Calu3 (cell line): ENCODE measurements at regions of chr10 and their contacts with region 1.

Region 1: DNA sequence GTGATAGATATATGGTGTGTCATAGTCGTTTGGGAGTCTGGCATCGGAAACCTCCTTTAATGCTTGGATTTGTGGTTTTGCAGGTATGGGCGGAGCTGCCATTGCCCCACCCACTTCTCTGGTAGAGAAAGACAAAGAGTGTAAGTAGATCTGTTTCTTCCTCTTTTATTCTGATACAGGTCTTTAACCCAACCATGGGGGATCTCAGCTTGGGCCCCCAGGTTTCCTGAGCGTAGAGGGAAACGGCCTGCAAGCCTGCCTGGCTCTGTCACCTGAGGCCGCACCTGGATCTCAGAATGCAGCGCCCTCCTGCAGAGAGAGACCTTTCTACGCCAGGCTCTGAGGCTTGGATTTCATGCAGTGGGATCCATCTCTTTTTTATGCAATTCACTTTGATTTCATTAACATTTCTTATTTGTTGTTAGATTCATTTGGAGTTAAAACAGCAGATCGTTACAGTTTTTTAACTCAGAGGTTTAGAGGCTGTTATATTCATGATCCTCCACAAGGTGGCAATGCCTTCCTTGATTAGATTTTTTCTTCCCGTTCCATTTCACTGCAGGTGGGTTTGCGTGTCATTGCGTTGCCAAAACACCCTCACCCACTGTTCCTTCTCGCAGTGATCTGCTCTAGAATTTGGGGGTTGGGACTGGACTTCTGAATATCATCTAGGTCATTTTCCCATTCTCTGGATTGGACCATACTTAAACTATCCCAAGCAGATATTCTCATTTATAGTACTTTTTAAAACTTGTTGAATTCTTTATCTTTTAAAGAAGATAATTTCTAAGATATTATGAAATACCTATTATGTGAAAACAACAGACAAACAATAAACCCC is 20.0 kb downstream of the RBM17 start:
- DNase-seq: peak; percentile 27
- H3K4me3 Mint-ChIP-seq: no peak overlapping the region
- H3K27ac Mint-ChIP-seq: peak overlapping the region; percentile 60
- H3K4me1 Mint-ChIP-seq: peaks cover 14% of the 10 kb centered on the region
- H3K27me3 Mint-ChIP-seq: no peaks in the 10 kb centered on the region
- CTCF ChIP-seq: peak; percentile 42

Region 2: GRCh38 chr10:6151087-6151977 is 42.5 kb after region 1 on chr10:
- CTCF ChIA-PET with region 1: no interaction called
- intact Hi-C with region 1: loop called (anchors 1 kb)
- DNase-seq: peak; percentile 38
- H3K4me3 Mint-ChIP-seq: no peak overlapping the region
- H3K27ac Mint-ChIP-seq: no peak overlapping the region
- H3K4me1 Mint-ChIP-seq: peaks cover 36% of the 10 kb centered on the region
- H3K27me3 Mint-ChIP-seq: no peaks in the 10 kb centered on the region
- CTCF ChIP-seq: peak; percentile 44

Region 3: GRCh38 chr10:6445501-6446316 is 336.9 kb after region 1 on chr10:
- CTCF ChIA-PET with region 1: no interaction called
- intact Hi-C with region 1: no loop called
- DNase-seq: peak; percentile 35
- H3K4me3 Mint-ChIP-seq: no peak overlapping the region
- H3K27ac Mint-ChIP-seq: no peak overlapping the region
- H3K4me1 Mint-ChIP-seq: no peaks in the 10 kb centered on the region
- H3K27me3 Mint-ChIP-seq: peaks cover 59% of the 10 kb centered on the region
- CTCF ChIP-seq: peak; percentile 21